CD8-positive, alpha-beta T cell (primary cell): ENCODE measurements at regions of chr12 and their contacts with region 1.

Region 1: GRCh38 chr12:50986966-50987737 is 34.8 kb downstream of the HIGD1C start:
- DNase-seq: peak in 7 of 9 experiments; percentile 18 to 62 (median 31)
- ATAC-seq: peak; percentile 58
- H3K4me3 ChIP-seq: no peak overlapping the region
- H3K4me3 Mint-ChIP-seq: no peak overlapping the region
- H3K27ac ChIP-seq: no peak overlapping the region
- H3K27ac Mint-ChIP-seq: peak overlapping the region; percentile 23
- H3K4me1 ChIP-seq: no peaks in the 10 kb centered on the region
- H3K4me1 Mint-ChIP-seq: peaks cover 6% of the 10 kb centered on the region
- H3K27me3 ChIP-seq: no peaks in the 10 kb centered on the region
- H3K27me3 Mint-ChIP-seq: no peaks in the 10 kb centered on the region
- CTCF ChIP-seq: no peak

Region 2: GRCh38 chr12:50825372-50825838 is 161.7 kb before region 1 on chr12:
- CTCF ChIA-PET with region 1: interaction called, 97 read pairs
- POLR2A ChIA-PET with region 1: interaction called, 6 read pairs
- intact Hi-C with region 1: loop called (anchors 1 kb)
- DNase-seq: peak in 2 of 9 experiments; percentile 67 to 81
- ATAC-seq: peak; percentile 92
- H3K4me3 ChIP-seq: no peak overlapping the region
- H3K4me3 Mint-ChIP-seq: no peak overlapping the region
- H3K27ac ChIP-seq: peak overlapping the region; percentile 6 to 26
- H3K27ac Mint-ChIP-seq: peak overlapping the region; percentile 87
- H3K4me1 ChIP-seq: no peaks in the 10 kb centered on the region
- H3K4me1 Mint-ChIP-seq: peaks cover 7% of the 10 kb centered on the region
- H3K27me3 ChIP-seq: no peaks in the 10 kb centered on the region
- H3K27me3 Mint-ChIP-seq: no peaks in the 10 kb centered on the region
- CTCF ChIP-seq: peak; percentile 67

Region 3: DNA sequence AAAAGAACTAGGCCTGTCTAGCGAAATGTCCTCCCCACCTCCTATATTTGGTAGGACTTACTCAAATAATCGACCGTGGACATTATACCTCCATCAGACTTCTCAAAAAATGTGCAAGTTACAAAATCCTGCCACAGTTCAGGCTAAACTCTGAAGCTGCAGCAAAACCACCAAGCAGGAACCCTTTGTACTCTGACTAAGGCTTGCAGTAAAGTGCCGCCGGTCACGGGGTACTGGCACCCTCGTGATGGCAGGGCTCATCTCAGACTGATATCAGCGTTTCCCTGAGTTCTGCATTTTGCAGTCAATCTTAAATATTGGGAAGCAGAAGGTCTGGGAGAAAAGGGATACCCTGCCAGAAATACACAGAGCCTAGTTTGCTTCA is 21.9 kb after region 1 on chr12:
- CTCF ChIA-PET with region 1: interaction called, 15 read pairs
- POLR2A ChIA-PET with region 1: interaction called, 7 read pairs
- intact Hi-C with region 1: no loop called
- DNase-seq: peak; percentile 16 to 76 (median 64)
- ATAC-seq: peak; percentile 99
- H3K4me3 ChIP-seq: peak overlapping the region; percentile 3 to 25
- H3K4me3 Mint-ChIP-seq: peak overlapping the region; percentile 64
- H3K27ac ChIP-seq: peak overlapping the region; percentile 12 to 16
- H3K27ac Mint-ChIP-seq: peak overlapping the region; percentile 84
- H3K4me1 ChIP-seq: peaks cover 18% of the 10 kb centered on the region
- H3K4me1 Mint-ChIP-seq: peaks cover 40% of the 10 kb centered on the region
- H3K27me3 ChIP-seq: no peaks in the 10 kb centered on the region
- H3K27me3 Mint-ChIP-seq: no peaks in the 10 kb centered on the region
- CTCF ChIP-seq: no peak